Right ventricle myocardium inferior (tissue), 1 donor: ENCODE measurements at regions of chr3 and their contacts with region 1.

Region 1: GRCh38 chr3:187164885-187165543 is 25.7 kb upstream of the RPL39L start:
- DNase-seq: no peak
- ATAC-seq: peak; percentile 27

Region 2: GRCh38 chr3:186849374-186849975 is 315.5 kb before region 1 on chr3:
- intact Hi-C with region 1: loop called (anchors 1 kb)
- DNase-seq: no peak
- ATAC-seq: peak; percentile 70

Region 3: GRCh38 chr3:187112934-187113793 is 51.9 kb before region 1 on chr3:
- intact Hi-C with region 1: loop called (anchors 2 kb)
- DNase-seq: no peak
- ATAC-seq: no peak

Region 4: DNA sequence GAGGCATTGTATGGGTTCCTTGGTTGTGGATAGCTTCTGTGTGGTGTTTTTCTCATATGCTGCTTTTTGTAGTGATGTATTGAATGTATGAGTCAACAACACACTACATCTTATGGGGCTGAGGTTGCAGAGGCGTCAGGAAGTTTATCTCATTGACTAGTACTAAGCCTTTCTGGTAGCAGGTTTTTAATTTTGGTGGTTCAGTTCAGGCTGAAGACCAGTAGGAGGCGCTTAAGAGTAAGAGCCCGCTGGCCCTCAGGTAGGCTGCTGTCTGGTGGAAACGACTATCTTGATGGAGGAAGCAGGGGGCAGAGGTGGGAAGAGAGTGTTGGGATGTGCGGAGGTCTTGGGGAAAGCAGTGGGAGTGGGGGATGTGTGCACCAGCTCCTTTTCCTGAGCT is 265.6 kb after region 1 on chr3:
- intact Hi-C with region 1: no loop called
- DNase-seq: no peak
- ATAC-seq: no peak